Ascending aorta (tissue), 2 donors: ENCODE measurements at regions of chr18 and their contacts with region 1.

Region 1: GRCh38 chr18:63016270-63016669 is 300.9 kb downstream of the PHLPP1 start:
- DNase-seq: no peak
- H3K4me3 ChIP-seq: no peak overlapping the region
- H3K27ac ChIP-seq: no peak overlapping the region
- H3K4me1 ChIP-seq: no peaks in the 10 kb centered on the region
- H3K27me3 ChIP-seq: no peaks in the 10 kb centered on the region
- CTCF ChIP-seq: peak; percentile 74 to 79 (median 79)

Region 2: GRCh38 chr18:63063171-63063570 is 46.9 kb after region 1 on chr18:
- intact Hi-C with region 1: no loop called
- DNase-seq: no peak
- H3K4me3 ChIP-seq: no peak overlapping the region
- H3K27ac ChIP-seq: no peak overlapping the region
- H3K4me1 ChIP-seq: no peaks in the 10 kb centered on the region
- H3K27me3 ChIP-seq: no peaks in the 10 kb centered on the region
- CTCF ChIP-seq: no peak

Region 3: DNA sequence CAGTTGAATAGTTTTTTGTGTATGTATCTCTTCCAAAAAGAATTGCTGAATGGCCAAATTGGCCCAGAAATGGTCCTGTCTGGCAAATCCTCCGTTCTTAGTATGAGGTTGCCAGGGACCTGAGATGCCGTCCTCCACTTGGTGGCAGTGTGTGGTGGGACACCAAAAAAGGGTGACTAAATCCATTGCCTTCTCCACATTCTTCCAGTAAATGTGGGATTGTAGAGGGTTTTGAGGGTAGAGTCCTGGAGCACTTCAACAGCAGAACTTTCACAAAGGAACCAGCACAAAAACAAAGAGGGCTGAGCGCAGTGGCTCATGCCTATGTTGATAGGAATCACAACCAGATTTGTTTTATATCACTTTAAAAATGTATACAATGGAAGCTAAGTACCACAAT is 103.4 kb after region 1 on chr18:
- intact Hi-C with region 1: loop called (anchors 10 kb)
- DNase-seq: no peak
- H3K4me3 ChIP-seq: no peak overlapping the region
- H3K27ac ChIP-seq: no peak overlapping the region
- H3K4me1 ChIP-seq: peaks cover 0 to 2% of the 10 kb centered on the region in 2 donors
- H3K27me3 ChIP-seq: no peaks in the 10 kb centered on the region
- CTCF ChIP-seq: peak; percentile 14 to 57 (median 44)

Region 4: DNA sequence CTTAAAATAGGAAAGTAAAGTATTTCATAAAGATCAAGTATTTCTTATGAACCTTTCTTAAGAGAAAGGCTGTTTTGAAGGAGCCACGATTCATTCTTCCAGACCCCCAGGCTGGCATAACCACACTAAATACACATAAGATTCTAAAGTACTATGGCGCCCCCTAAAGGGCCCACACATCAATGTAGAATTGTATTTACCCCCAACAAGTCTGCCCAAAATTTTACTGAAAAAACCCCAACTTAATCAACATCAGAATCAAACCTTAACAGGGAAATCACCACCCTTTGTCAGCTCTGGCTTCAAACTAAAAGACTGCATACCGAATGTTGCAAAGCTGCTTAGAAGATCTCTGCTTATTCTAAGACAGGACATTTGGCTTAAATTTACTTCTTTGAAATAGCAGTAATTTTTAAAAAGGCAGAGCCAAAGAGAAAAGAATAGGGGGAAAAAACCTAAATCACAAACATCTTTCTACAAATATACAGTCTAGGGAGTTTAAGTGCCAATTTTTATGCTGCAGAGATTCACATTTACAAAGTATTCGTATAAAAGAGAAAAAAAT is 323.7 kb after region 1 on chr18:
- intact Hi-C with region 1: loop called (anchors 5 kb)
- DNase-seq: no peak
- H3K4me3 ChIP-seq: no peak overlapping the region
- H3K27ac ChIP-seq: no peak overlapping the region
- H3K4me1 ChIP-seq: no peaks in the 10 kb centered on the region
- H3K27me3 ChIP-seq: no peaks in the 10 kb centered on the region
- CTCF ChIP-seq: peak in 2 of 3 experiments; percentile 25 to 48